ENCODE measurements at regions of chr12 and their contacts with region 1.

Region 1: GRCh38 chr12:75712252-75712651 is 200.8 kb upstream of the KRR1 start:
- DNase-seq: peak; percentile 95
- ATAC-seq: peak; percentile 17
- H3K4me3 ChIP-seq: no peak overlapping the region; a peak in 1 of 4 replicates
- H3K27ac ChIP-seq: peak overlapping the region; percentile 100
- H3K4me1 ChIP-seq: peaks cover 89 to 98% of the 10 kb centered on the region in 2 experiments
- H3K27me3 ChIP-seq: no peaks in the 10 kb centered on the region
- CTCF ChIP-seq: no peak
- POLR2A ChIP-seq: no peak
- RAD21 ChIP-seq: peak; percentile 44

Region 2: DNA sequence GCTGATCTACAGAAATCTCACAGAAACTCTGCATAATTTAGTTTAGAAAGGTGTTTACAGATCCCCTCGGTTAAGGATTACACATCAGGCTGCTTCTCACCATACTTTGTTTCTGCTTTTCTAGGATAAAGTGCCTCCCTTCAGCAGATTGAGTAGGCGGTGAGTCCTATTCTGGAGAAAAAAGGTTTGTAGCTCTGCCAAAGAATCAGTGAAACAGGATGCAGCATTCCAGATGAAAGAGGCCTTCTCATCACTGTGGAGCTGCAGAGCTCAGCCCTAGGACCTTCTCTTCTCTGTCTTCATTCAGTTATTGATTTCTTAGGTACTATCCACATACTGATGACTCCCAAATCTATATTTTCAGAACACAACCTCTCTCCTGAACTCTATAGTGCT is 45.3 kb before region 1 on chr12:
- CTCF ChIA-PET with region 1: no interaction called
- POLR2A ChIA-PET with region 1: interaction called, 10 read pairs
- RAD21 ChIA-PET with region 1: no interaction called
- intact Hi-C with region 1: no loop called
- DNase-seq: peak; percentile 54
- ATAC-seq: peak; percentile 73
- H3K4me3 ChIP-seq: no peak overlapping the region
- H3K27ac ChIP-seq: peak overlapping the region; percentile 99
- H3K4me1 ChIP-seq: peaks cover 67 to 79% of the 10 kb centered on the region in 2 experiments
- H3K27me3 ChIP-seq: no peaks in the 10 kb centered on the region
- CTCF ChIP-seq: no peak
- POLR2A ChIP-seq: no peak
- RAD21 ChIP-seq: no peak; the same call in 1 of the 2 replicates

Region 3: DNA sequence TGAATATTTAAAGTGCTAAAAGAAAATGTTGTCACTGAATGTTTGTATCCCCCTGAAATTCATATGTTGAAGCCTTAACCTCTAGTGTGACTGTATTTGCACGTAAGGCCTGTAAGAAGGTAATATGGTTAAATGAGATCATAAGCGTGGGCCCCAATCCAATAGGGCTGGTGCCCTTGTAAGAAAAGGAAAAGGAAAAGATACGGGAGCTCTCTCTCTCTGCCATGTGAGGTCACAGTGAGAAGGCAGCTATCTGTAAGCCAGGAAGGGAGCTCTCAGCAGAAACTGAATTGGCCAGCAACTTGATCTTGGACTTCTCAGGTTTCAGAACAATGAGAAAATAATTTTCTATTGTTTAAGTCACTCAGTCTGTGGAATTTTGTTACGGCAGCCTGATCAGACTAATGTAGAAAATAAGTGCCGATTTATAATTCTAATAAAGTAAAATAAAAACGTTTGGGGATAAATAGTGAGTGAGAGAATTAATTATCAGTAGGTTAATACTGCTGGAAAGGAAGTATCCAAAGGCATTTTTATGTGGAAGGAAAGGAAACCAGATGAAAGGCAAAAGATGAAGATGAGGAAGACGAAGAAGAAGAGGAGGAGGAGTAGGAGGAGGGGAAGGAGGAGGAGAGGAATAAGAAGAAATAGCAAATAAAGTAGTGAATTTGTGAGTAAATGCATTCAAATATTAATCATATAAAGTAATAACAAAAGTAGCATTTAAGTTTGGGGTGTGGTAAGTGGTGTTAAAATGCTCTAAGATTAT is 12.3 kb before region 1 on chr12:
- CTCF ChIA-PET with region 1: no interaction called
- POLR2A ChIA-PET with region 1: interaction called, 14 read pairs
- RAD21 ChIA-PET with region 1: no interaction called
- intact Hi-C with region 1: no loop called
- DNase-seq: no peak
- ATAC-seq: peak; percentile 27
- H3K4me3 ChIP-seq: 0 out of 4 replicates have a peak overlapping the region, but pooled peaks of 1 of the 2 experiments have one; percentile 17
- H3K27ac ChIP-seq: peak overlapping the region; percentile 100
- H3K4me1 ChIP-seq: peaks cover 92 to 100% of the 10 kb centered on the region in 2 experiments
- H3K27me3 ChIP-seq: no peaks in the 10 kb centered on the region
- CTCF ChIP-seq: no peak
- POLR2A ChIP-seq: peak; percentile 2
- RAD21 ChIP-seq: peak; percentile 24; the same call in 1 of the 2 replicates

Region 4: DNA sequence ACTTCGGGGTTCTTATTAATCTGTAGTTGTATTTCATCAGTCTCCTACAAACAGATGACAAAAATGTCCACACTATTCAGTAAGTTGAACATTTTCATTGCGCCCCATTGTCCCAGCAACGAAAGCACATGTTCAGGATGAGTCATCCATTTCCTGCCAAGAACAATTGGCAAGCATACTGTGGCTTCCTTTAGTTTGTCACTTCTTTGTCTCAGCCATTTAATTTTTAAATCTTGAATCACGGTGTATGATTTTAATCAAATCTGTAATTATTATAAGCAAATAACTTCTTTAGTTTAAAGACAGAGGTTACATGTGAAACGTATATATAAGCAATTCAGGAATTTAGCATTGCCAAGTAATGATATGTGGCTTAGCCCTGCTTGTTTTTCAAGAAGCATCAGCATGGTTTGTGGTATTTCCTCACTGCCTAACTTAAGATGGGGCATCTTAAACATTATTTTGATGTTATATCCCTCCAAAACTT is 10.5 kb after region 1 on chr12:
- CTCF ChIA-PET with region 1: interaction called, 9 read pairs
- POLR2A ChIA-PET with region 1: interaction called, 37 read pairs
- RAD21 ChIA-PET with region 1: interaction called in 1 of 2 experiments, 4 read pairs
- intact Hi-C with region 1: no loop called
- DNase-seq: peak; percentile 77
- ATAC-seq: no peak
- H3K4me3 ChIP-seq: no peak overlapping the region
- H3K27ac ChIP-seq: peak overlapping the region; percentile 100
- H3K4me1 ChIP-seq: peaks cover 87 to 96% of the 10 kb centered on the region in 2 experiments
- H3K27me3 ChIP-seq: no peaks in the 10 kb centered on the region
- CTCF ChIP-seq: no peak
- POLR2A ChIP-seq: no peak
- RAD21 ChIP-seq: no peak

Region 5: DNA sequence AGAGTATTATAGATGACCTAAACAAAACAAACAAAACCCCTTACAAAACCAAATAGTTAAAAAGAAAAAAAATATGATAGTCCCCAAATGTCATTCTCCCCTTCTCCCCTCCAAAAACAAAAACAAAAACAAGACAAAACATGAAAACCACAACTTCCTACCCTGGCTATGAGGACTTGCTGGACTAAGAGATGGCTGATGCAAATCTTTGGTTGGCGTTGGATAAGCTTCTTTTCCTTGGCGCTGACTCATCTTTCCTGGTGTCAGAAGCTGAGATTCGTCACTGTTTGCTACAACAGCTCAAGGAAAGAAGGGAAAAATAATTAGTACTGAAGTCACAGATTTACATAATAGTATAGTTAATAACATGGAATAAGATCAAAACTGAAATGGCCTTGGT is 738.4 kb after region 1 on chr12:
- CTCF ChIA-PET with region 1: no interaction called
- POLR2A ChIA-PET with region 1: no interaction called
- RAD21 ChIA-PET with region 1: no interaction called
- intact Hi-C with region 1: loop called (anchors 5 kb)
- DNase-seq: peak; percentile 74
- ATAC-seq: peak; percentile 39; the same call in 1 of the 2 replicates
- H3K4me3 ChIP-seq: no peak overlapping the region
- H3K27ac ChIP-seq: peak overlapping the region; percentile 63; the same call in 1 of the 2 replicates
- H3K4me1 ChIP-seq: peaks cover 42 to 61% of the 10 kb centered on the region in 2 experiments
- H3K27me3 ChIP-seq: no peaks in the 10 kb centered on the region
- CTCF ChIP-seq: no peak
- POLR2A ChIP-seq: no peak
- RAD21 ChIP-seq: no peak